ENCODE measurements at regions of chr10 and their contacts with region 1.

Region 1: GRCh38 chr10:80136081-80136571 is 3.6 kb downstream of the PLAC9 start:
- DNase-seq: peak; percentile 93 to 95
- ATAC-seq: peak; percentile 71 to 90 (median 84)
- H3K4me3 ChIP-seq: peak overlapping the region in 4 of 10 donors; percentile 2 to 69 (median 17)
- H3K27ac ChIP-seq: peak overlapping the region; percentile 47 to 92 (median 80)
- H3K4me1 ChIP-seq: peaks cover 8 to 67% (median 41%) of the 10 kb centered on the region in 9 donors
- H3K27me3 ChIP-seq: peaks cover 0 to 33% (median 0%) of the 10 kb centered on the region in 7 donors
- CTCF ChIP-seq: no peak

Region 2: GRCh38 chr10:80055760-80056159 is 80.4 kb before region 1 on chr10:
- intact Hi-C with region 1: loop called in 3 of 10 experiments (anchors 5 kb)
- DNase-seq: peak in 1 of 2 donors; percentile 30
- ATAC-seq: peak in 6 of 8 donors; percentile 27 to 76 (median 60)
- H3K4me3 ChIP-seq: no peak overlapping the region
- H3K27ac ChIP-seq: no peak overlapping the region
- H3K4me1 ChIP-seq: no peaks in the 10 kb centered on the region
- H3K27me3 ChIP-seq: no peaks in the 10 kb centered on the region
- CTCF ChIP-seq: no peak

Region 3: GRCh38 chr10:80064120-80064886 is 71.8 kb before region 1 on chr10:
- intact Hi-C with region 1: loop called in 3 of 10 experiments (anchors 5 kb)
- DNase-seq: no peak
- ATAC-seq: peak in 3 of 8 donors; percentile 28 to 52 (median 47)
- H3K4me3 ChIP-seq: no peak overlapping the region
- H3K27ac ChIP-seq: peak overlapping the region in 7 of 10 donors; percentile 2 to 69 (median 41)
- H3K4me1 ChIP-seq: peaks cover 0 to 7% (median 0%) of the 10 kb centered on the region in 9 donors
- H3K27me3 ChIP-seq: no peaks in the 10 kb centered on the region
- CTCF ChIP-seq: no peak

Region 4: GRCh38 chr10:80078448-80079311 is 57.4 kb before region 1 on chr10 and contains the start of gene TMEM254:
- intact Hi-C with region 1: loop called in 6 of 10 experiments (anchors 2 to 10 kb)
- DNase-seq: peak; percentile 93 to 95
- ATAC-seq: peak; percentile 97 to 99 (median 98)
- H3K4me3 ChIP-seq: peak within 1 kb of the TSS; percentile 64 to 96 (median 79)
- H3K27ac ChIP-seq: peak within 1 kb of the TSS; percentile 90 to 100 (median 96)
- H3K4me1 ChIP-seq: peaks cover 2 to 19% (median 16%) of the 10 kb centered on the region in 9 donors
- H3K27me3 ChIP-seq: no peaks in the 10 kb centered on the region
- CTCF ChIP-seq: peak in 1 of 9 donors; percentile 6
- total RNA-seq, gene TMEM254: 5.5 to 10.7 (median 8.3) TPM

Region 5: DNA sequence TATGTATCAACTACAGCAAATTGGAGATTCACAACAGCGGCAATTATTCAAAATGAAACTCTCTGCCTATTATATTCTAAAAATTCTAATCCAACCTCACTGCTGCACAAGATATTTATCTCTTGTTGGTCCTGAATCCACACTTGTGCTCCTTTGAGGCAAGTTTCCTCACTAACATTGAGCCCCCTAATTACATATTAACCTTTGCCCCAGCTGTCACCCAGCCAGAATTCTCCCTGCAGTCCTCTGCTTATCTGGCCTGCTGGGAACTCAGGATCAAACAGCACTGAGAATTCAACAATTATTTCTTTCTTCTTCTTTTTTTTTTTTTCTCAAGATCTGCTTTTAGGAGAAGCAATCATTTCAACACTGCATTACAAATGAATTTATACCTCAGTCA is 25.1 kb before region 1 on chr10:
- intact Hi-C with region 1: no loop called
- DNase-seq: no peak
- ATAC-seq: peak in 1 of 8 donors; percentile 43
- H3K4me3 ChIP-seq: peak overlapping the region in 1 of 10 donors; percentile 29
- H3K27ac ChIP-seq: peak overlapping the region; percentile 29 to 89 (median 76)
- H3K4me1 ChIP-seq: peaks cover 5 to 24% (median 12%) of the 10 kb centered on the region in 9 donors
- H3K27me3 ChIP-seq: no peaks in the 10 kb centered on the region
- CTCF ChIP-seq: no peak

Region 6: GRCh38 chr10:80158598-80159127 is 22.5 kb after region 1 on chr10:
- intact Hi-C with region 1: no loop called
- DNase-seq: peak; percentile 84 to 94
- ATAC-seq: peak; percentile 89 to 96 (median 94)
- H3K4me3 ChIP-seq: peak overlapping the region in 1 of 10 donors; percentile 25
- H3K27ac ChIP-seq: peak overlapping the region; percentile 44 to 90 (median 80)
- H3K4me1 ChIP-seq: peaks cover 9 to 71% (median 53%) of the 10 kb centered on the region in 9 donors
- H3K27me3 ChIP-seq: no peaks in the 10 kb centered on the region
- CTCF ChIP-seq: no peak

Measured in heart right ventricle (tissue), 16 donors.